Natural killer cell (primary cell): ENCODE measurements at regions of chr14 and their contacts with region 1.

Region 1: DNA sequence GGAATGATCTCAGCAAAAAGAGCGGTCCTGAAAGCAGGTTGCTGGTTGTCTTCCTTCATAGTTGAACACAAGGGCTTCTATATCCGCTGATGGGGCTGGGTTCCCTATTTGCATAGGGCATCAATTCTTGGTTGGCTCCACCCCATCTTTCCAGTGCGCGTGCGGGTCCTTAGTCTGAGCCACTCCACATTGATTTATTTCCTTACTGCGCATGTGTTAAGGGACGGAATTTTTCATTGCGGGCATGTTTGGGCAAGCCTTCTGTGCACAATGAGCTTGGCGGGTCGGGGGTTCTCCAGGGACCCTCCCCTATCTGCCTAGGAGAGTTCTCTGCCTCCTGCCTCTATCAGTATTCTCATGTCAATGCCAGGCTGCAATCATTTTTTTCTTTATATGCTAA is 21.2 kb upstream of the DLGAP5 start:
- DNase-seq: peak in 1 of 2 donors; percentile 5
- ATAC-seq: no peak
- H3K4me3 ChIP-seq: no peak overlapping the region
- H3K4me3 Mint-ChIP-seq: no peak overlapping the region
- H3K27ac ChIP-seq: no peak overlapping the region
- H3K27ac Mint-ChIP-seq: no peak overlapping the region
- H3K4me1 ChIP-seq: no peaks in the 10 kb centered on the region
- H3K4me1 Mint-ChIP-seq: peaks cover 0 to 5% of the 10 kb centered on the region in 2 donors
- H3K27me3 ChIP-seq: no peaks in the 10 kb centered on the region
- H3K27me3 Mint-ChIP-seq: no peaks in the 10 kb centered on the region
- CTCF ChIP-seq: no peak

Region 2: DNA sequence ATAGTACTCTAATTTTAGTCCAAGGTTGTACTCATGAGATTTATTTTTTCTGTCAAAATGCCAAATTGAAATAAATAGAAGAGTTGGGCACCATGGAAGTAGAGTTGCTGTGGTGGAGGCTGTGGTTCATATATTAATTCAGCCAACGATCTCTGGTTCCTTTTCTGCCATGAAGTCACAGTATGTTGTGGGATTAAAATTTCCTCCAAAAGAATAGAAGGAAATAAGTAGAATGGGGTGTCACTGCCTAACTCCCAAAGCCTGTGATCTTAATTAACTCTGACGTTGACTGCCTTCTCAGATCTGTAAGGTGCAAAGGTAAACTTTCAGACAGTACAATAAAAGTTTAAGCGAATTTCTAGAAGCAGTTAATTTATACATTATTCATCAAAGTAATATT is 21.0 kb after region 1 on chr14:
- intact Hi-C with region 1: no loop called
- DNase-seq: no peak
- ATAC-seq: no peak
- H3K4me3 ChIP-seq: no peak overlapping the region
- H3K4me3 Mint-ChIP-seq: no peak overlapping the region
- H3K27ac ChIP-seq: no peak overlapping the region
- H3K27ac Mint-ChIP-seq: no peak overlapping the region
- H3K4me1 ChIP-seq: no peaks in the 10 kb centered on the region
- H3K4me1 Mint-ChIP-seq: no peaks in the 10 kb centered on the region
- H3K27me3 ChIP-seq: no peaks in the 10 kb centered on the region
- H3K27me3 Mint-ChIP-seq: peaks cover 17 to 39% of the 10 kb centered on the region in 2 donors
- CTCF ChIP-seq: no peak

Region 3: GRCh38 chr14:55277972-55278740 is 65.5 kb after region 1 on chr14:
- intact Hi-C with region 1: no loop called
- DNase-seq: peak in 1 of 2 donors; percentile 29
- ATAC-seq: peak; percentile 34 to 57 (median 55)
- H3K4me3 ChIP-seq: no peak overlapping the region
- H3K4me3 Mint-ChIP-seq: peak overlapping the region; percentile 65
- H3K27ac ChIP-seq: peak overlapping the region; percentile 24
- H3K27ac Mint-ChIP-seq: peak overlapping the region; percentile 85 to 86
- H3K4me1 ChIP-seq: peaks cover 26% of the 10 kb centered on the region
- H3K4me1 Mint-ChIP-seq: peaks cover 64 to 74% of the 10 kb centered on the region in 2 donors
- H3K27me3 ChIP-seq: no peaks in the 10 kb centered on the region
- H3K27me3 Mint-ChIP-seq: no peaks in the 10 kb centered on the region
- CTCF ChIP-seq: no peak

Region 4: DNA sequence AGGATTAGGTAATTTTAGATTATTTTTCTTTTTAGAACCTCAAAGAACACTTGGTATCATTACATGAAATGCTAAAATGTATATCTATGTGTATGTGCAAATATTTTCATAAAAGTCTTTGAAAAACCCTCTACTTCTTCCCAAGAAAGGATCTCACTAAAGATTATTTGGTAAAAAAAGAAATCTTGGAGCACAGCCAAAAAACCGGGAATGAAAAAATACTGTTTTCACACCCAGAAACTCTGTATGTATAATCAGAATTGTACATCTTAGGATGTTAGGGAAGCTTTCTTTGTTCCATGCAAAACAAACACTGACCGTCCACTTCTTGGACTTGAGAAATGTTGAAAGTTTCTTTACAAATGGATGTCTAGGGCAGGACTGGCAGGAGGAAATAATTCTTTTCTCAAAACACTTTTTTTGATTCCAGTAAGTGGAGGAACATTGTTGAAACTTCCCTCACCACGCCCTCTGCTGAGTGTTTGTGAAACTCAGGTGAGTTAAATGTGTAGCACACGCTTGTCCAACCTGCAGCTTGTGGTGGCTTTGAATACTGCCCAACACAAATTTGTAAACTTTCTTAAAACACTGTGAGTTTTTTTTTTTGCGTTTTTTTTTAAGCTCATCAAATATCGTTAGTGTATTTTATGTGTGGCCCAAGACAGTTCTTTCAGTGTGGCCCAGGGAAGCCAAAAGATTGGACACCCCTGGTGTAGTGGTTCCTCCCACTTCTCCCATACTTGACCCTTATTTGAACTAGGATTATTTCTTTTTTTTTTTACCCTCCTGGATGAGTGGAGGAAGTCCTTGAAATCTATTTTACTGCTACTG is 85.2 kb after region 1 on chr14:
- intact Hi-C with region 1: no loop called
- DNase-seq: peak in 1 of 2 donors; percentile 54
- ATAC-seq: no peak
- H3K4me3 ChIP-seq: no peak overlapping the region
- H3K4me3 Mint-ChIP-seq: no peak overlapping the region
- H3K27ac ChIP-seq: no peak overlapping the region
- H3K27ac Mint-ChIP-seq: no peak overlapping the region
- H3K4me1 ChIP-seq: peaks cover 4% of the 10 kb centered on the region
- H3K4me1 Mint-ChIP-seq: peaks cover 59 to 67% of the 10 kb centered on the region in 2 donors
- H3K27me3 ChIP-seq: no peaks in the 10 kb centered on the region
- H3K27me3 Mint-ChIP-seq: no peaks in the 10 kb centered on the region
- CTCF ChIP-seq: no peak

Region 5: GRCh38 chr14:55411426-55412389 is 199.1 kb after region 1 on chr14 and contains the start of gene ATG14:
- intact Hi-C with region 1: loop called (anchors 5 kb)
- DNase-seq: peak; percentile 68 to 82
- ATAC-seq: peak; percentile 95 to 99 (median 99)
- H3K4me3 ChIP-seq: peak within 1 kb of the TSS; percentile 91
- H3K4me3 Mint-ChIP-seq: peak within 1 kb of the TSS; percentile 93
- H3K27ac ChIP-seq: peak within 1 kb of the TSS; percentile 52
- H3K27ac Mint-ChIP-seq: peak within 1 kb of the TSS; percentile 60 to 87
- H3K4me1 ChIP-seq: peaks cover 10% of the 10 kb centered on the region
- H3K4me1 Mint-ChIP-seq: peaks cover 30 to 34% of the 10 kb centered on the region in 2 donors
- H3K27me3 ChIP-seq: no peaks in the 10 kb centered on the region
- H3K27me3 Mint-ChIP-seq: peaks cover 0 to 3% of the 10 kb centered on the region in 2 donors
- CTCF ChIP-seq: no peak
- total RNA-seq, gene ATG14: 18.1 to 23.1 (median 20.5) TPM

Region 6: GRCh38 chr14:55430024-55430690 is 217.5 kb after region 1 on chr14:
- intact Hi-C with region 1: loop called (anchors 1 kb)
- DNase-seq: peak in 1 of 2 donors; percentile 84
- ATAC-seq: peak; percentile 74 to 89 (median 88)
- H3K4me3 ChIP-seq: no peak overlapping the region
- H3K4me3 Mint-ChIP-seq: no peak overlapping the region
- H3K27ac ChIP-seq: no peak overlapping the region
- H3K27ac Mint-ChIP-seq: no peak overlapping the region
- H3K4me1 ChIP-seq: peaks cover 6% of the 10 kb centered on the region
- H3K4me1 Mint-ChIP-seq: peaks cover 9 to 15% of the 10 kb centered on the region in 2 donors
- H3K27me3 ChIP-seq: no peaks in the 10 kb centered on the region
- H3K27me3 Mint-ChIP-seq: peaks cover 0 to 12% of the 10 kb centered on the region in 2 donors
- CTCF ChIP-seq: peak; percentile 28

Region 7: DNA sequence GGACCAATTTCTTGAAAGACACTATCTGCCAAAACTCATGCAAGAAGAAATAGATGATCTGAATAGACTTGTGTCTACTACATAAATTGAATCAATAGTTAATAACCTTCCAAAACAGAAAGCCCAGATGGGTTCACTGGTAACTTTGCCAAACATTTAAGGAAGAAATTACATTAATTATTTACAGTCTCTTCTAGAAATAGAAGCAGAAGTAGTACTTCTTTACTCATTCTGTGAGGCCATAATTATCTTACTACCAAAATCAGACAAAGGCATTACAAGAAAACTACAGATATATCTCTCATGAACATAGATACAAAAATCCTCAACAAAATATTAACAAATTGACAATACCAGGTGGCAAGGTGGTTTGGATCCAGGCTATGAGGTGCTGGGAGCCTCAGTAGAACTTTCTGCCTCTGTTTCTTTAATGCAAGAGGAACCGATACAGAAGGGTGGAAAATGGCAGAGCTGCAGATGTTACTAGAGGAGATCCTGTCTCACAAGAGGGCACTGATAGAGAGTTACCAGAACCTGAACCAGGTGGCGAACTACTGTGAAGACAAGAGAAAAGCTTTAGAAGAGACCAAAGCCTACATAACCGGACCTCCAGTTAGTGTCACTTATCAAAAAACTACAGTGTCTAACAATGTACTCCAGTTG is 333.7 kb after region 1 on chr14:
- intact Hi-C with region 1: no loop called
- DNase-seq: no peak
- ATAC-seq: no peak
- H3K4me3 ChIP-seq: no peak overlapping the region
- H3K4me3 Mint-ChIP-seq: no peak overlapping the region
- H3K27ac ChIP-seq: no peak overlapping the region
- H3K27ac Mint-ChIP-seq: no peak overlapping the region
- H3K4me1 ChIP-seq: no peaks in the 10 kb centered on the region
- H3K4me1 Mint-ChIP-seq: no peaks in the 10 kb centered on the region
- H3K27me3 ChIP-seq: no peaks in the 10 kb centered on the region
- H3K27me3 Mint-ChIP-seq: peaks cover 16 to 27% of the 10 kb centered on the region in 2 donors
- CTCF ChIP-seq: no peak

Region 8: DNA sequence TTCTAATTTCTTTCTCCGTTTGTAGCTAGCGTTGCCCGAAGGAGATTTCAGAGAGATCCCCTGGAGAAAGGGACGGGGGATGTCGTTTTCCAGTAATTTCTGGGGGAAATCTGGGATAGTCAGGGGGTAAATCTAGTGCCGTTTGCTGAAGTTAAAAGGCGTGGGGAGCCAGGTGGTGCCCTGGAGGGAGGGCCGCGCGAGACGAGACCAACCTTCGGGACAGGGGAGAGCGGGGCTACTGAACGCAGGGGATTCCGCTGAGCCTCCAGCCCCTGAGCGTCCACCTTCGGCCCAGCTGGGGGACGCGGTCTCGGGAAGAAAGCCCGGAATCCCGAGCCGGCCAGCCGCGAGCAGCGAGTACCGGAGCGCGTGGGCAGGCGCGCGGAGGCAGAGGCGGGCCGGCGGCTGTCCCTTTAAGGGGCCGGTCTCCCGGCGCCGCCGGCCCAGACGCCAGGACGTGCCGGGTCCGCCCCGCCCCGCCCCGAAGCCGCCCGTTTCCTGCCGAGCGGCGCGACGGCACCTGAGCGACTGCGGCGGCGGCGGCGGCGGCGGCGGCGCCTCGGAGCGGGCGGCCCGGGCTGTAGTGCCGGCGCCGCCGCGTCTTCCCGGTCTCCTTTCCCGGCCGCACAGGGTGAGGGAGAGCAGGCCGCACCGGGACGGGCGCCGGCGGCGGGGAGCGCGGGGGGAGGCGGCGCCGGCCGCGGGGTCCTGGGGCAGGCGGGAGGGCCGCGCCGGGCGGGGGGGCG is 367.3 kb after region 1 on chr14 and contains the start of gene KTN1:
- intact Hi-C with region 1: loop called (anchors 2 kb)
- DNase-seq: peak; percentile 83 to 89
- ATAC-seq: peak; percentile 88 to 95 (median 90)
- H3K4me3 ChIP-seq: peak within 1 kb of the TSS; percentile 83
- H3K4me3 Mint-ChIP-seq: peak within 1 kb of the TSS; percentile 97
- H3K27ac ChIP-seq: peak within 1 kb of the TSS; percentile 83
- H3K27ac Mint-ChIP-seq: peak within 1 kb of the TSS; percentile 90 to 91
- H3K4me1 ChIP-seq: peaks cover 18% of the 10 kb centered on the region
- H3K4me1 Mint-ChIP-seq: peaks cover 24 to 27% of the 10 kb centered on the region in 2 donors
- H3K27me3 ChIP-seq: no peaks in the 10 kb centered on the region
- H3K27me3 Mint-ChIP-seq: no peaks in the 10 kb centered on the region
- CTCF ChIP-seq: no peak
- total RNA-seq, gene KTN1: 63.1 to 96.7 (median 72.8) TPM